ENCODE measurements at regions of chr21 and their contacts with region 1.

Region 1: DNA sequence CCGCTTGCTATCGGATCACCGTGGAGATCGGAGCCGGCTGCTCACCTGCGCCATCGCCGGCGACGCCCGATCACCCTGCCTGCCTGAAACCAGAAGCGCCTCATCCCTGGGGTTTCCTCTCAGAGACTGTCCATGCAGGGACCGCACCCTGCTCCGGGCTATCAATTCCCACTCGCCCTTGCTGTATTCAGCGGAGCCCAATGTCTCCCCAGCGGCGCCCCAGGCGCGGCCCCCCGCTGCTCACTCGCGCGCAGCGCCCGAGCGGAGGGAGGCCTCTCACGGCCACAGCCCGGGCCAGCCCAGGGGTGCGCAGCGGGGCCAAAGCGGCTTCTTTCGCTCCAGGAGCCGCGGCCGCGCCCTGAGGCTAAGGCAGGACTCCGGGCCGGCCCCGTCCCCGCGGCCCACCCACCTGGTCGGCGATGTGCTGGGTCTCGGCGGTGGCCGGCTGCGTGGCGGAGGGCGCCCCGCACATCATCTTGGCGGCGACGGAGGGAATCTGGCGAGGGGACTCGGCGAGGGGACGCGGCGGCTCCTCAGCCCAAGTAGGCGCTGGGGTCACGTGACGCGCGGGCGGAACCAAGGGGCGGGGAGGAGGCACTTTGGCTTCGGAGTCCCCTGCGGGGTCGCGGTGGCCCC is at the start of gene CSTB:
- DNase-seq: peak; percentile 79 to 84
- H3K4me3 ChIP-seq: peak within 1 kb of the TSS; percentile 80 to 88 (median 86)
- H3K27ac ChIP-seq: peak within 1 kb of the TSS; percentile 77 to 89 (median 80)
- H3K4me1 ChIP-seq: peaks cover 12 to 13% of the 10 kb centered on the region in 2 donors
- H3K27me3 ChIP-seq: no peaks in the 10 kb centered on the region
- CTCF ChIP-seq: no peak
- POLR2A ChIP-seq: peak; percentile 53 to 90
- total RNA-seq, gene CSTB: 9.1 to 32.4 (median 14.5) TPM

Region 2: GRCh38 chr21:43789276-43790009 is 13.5 kb after region 1 on chr21 and contains the start of gene RRP1:
- intact Hi-C with region 1: loop called (anchors 2 kb)
- DNase-seq: peak; percentile 86 to 91
- H3K4me3 ChIP-seq: peak within 1 kb of the TSS; percentile 83 to 92 (median 88)
- H3K27ac ChIP-seq: peak within 1 kb of the TSS; percentile 90 to 96 (median 93)
- H3K4me1 ChIP-seq: peaks cover 10 to 12% of the 10 kb centered on the region in 2 donors
- H3K27me3 ChIP-seq: no peaks in the 10 kb centered on the region
- CTCF ChIP-seq: peak; percentile 38 to 100 (median 100)
- POLR2A ChIP-seq: peak in 1 of 2 donors; percentile 79
- total RNA-seq, gene RRP1: 11.0 to 20.1 (median 18.7) TPM

Region 3: DNA sequence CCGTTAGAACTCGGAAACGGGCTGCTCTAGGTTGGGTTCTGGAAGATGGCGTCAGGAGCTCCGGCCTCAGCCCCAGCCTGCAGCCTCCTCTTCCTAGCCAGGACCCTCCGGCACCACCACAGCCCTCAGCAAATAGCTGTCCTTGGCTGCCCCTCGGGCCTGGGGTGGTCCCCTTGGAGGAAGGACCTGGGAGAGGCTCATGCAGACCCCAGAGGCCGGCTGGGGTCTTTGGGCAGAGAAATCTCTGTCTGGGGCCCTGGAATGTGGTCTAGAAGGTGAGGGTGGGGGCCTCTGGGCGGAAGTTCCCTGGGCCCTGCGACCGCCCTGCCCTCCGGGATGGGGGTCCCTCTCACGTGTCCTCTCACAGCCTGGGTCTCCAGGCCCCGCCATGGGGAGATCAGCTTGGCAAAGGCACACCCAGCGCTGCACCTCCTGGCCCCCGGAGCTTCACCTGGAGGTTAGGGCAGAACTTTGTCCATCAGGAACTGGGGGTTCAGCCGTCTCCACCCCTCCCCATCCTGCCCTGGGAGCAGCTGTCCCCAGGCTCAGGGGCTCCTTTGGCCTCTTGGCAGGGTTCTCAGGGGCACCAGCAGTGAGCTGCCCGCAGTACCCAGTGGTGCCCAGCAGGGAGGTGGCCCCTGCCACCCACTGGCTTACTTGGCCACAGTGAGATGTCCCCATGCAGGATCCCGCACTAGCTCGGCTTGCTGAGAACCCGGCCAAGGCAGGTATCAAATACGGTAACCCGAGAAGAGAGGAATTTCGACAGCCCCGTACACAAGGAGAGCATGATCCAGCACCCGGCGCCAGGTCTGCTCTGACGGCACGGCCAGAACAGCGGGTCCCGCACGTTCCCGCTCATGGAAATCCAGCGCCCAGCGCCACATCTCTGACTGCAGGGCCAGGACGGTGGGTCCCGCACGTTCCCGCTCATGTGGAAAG is 50.0 kb after region 1 on chr21:
- intact Hi-C with region 1: no loop called
- DNase-seq: peak; percentile 44
- H3K4me3 ChIP-seq: no peak overlapping the region
- H3K27ac ChIP-seq: no peak overlapping the region
- H3K4me1 ChIP-seq: peaks cover 0 to 7% of the 10 kb centered on the region in 2 donors
- H3K27me3 ChIP-seq: no peaks in the 10 kb centered on the region
- CTCF ChIP-seq: peak in 2 of 6 experiments; percentile 7 to 10
- POLR2A ChIP-seq: no peak

Measured in thyroid gland (tissue), 4 donors.